ENCODE measurements at regions of chr12 and their contacts with region 1.

Region 1: GRCh38 chr12:113766879-113767878 is 198.9 kb downstream of the RBM19 start:
- DNase-seq: peak; percentile 57
- H3K4me3 Mint-ChIP-seq: peak overlapping the region; percentile 37
- H3K27ac Mint-ChIP-seq: no peak overlapping the region
- H3K4me1 Mint-ChIP-seq: peaks cover 33% of the 10 kb centered on the region
- H3K27me3 Mint-ChIP-seq: peaks cover 43% of the 10 kb centered on the region
- CTCF ChIP-seq: no peak

Region 2: GRCh38 chr12:113591480-113591974 is 175.7 kb before region 1 on chr12:
- CTCF ChIA-PET with region 1: no interaction called
- intact Hi-C with region 1: loop called (anchors 2 kb)
- DNase-seq: peak; percentile 53
- H3K4me3 Mint-ChIP-seq: peak overlapping the region; percentile 23
- H3K27ac Mint-ChIP-seq: no peak overlapping the region
- H3K4me1 Mint-ChIP-seq: no peaks in the 10 kb centered on the region
- H3K27me3 Mint-ChIP-seq: peaks cover 85% of the 10 kb centered on the region
- CTCF ChIP-seq: no peak

Measured in Calu3 (cell line).